ENCODE measurements at regions of chr21 and their contacts with region 1.

Region 1: GRCh38 chr21:36927719-36928117 is 38.8 kb downstream of the HLCS start:
- DNase-seq: peak; percentile 93
- H3K4me3 ChIP-seq: no peak overlapping the region
- H3K27ac ChIP-seq: no peak overlapping the region
- H3K4me1 ChIP-seq: no peaks in the 10 kb centered on the region
- H3K27me3 ChIP-seq: no peaks in the 10 kb centered on the region

Region 2: DNA sequence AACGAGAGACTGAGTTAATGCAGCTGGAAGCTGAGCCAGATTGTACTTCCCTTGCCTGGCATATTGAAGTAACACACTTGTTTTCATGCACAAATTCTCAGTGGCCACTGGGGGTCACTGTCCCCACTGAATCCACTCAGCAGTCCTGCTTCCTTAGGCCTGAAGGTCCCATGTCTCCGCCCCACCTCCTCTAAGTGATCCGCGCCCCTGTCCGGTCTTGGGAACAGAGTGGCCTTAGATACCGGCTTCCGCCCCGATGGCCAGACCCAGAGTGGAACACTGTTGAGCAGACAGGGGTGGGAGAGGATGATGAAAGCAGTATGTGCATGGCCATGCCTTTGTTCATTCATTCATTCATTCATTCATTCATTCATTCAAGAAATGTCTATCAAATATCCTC is 507.7 kb before region 1 on chr21:
- in situ Hi-C with region 1: loop called (anchors 25 kb)
- DNase-seq: peak; percentile 91
- H3K4me3 ChIP-seq: no peak overlapping the region
- H3K27ac ChIP-seq: no peak overlapping the region
- H3K4me1 ChIP-seq: no peaks in the 10 kb centered on the region
- H3K27me3 ChIP-seq: no peaks in the 10 kb centered on the region

Region 3: DNA sequence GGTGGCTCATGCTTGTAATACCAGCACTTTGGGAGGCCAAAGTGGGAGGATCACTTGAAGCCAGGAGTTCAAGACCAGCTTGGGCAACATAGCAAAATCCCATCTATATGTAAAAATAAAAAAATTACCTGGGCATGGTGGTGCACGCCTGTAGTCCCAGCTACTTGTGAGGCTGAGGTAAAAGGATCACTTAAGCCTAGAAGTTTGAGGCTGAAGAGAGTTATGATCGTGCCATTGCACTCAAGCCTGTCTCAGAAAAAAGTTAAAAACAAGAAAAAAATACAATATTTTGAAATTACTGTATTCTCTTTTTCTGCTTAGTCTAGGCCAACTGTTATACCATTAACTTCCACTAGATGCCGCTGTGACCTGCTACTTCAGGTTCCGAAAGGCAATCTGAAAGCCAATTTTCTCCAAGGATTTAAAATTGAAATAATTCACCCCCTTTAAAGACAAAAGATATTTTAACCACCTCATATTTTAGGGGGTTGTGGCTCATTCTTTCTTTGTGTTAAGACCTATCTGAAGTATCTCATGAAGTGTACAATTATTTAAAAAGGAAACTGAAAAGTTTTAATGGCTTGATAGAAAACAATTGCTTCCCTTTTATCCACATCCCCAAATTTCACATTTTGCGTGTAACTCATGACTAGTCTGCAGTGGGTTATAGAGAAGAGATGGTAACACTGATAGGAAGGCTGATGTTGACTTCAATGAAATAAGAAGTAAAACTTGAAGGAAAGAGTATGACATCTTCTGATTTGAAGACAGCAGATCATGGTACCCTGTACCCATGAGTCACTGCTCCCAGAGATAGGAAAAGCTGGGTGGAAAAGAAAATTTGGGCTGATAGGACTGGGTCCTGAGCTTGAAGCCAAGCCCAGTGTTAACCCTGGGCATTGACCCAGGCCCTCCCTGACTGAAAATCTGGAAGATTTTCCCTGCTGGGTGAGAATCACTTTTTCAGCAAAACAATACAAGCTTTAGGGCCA is 423.4 kb before region 1 on chr21:
- in situ Hi-C with region 1: loop called (anchors 10 kb)
- DNase-seq: peak; percentile 61
- H3K4me3 ChIP-seq: no peak overlapping the region
- H3K27ac ChIP-seq: no peak overlapping the region
- H3K4me1 ChIP-seq: 0 out of 2 replicates have a peak, but pooled peaks cover 4% of the 10 kb centered on the region
- H3K27me3 ChIP-seq: no peaks in the 10 kb centered on the region

Region 4: GRCh38 chr21:36630485-36631206 is 297.1 kb before region 1 on chr21:
- in situ Hi-C with region 1: loop called (anchors 25 kb)
- DNase-seq: peak; percentile 66
- H3K4me3 ChIP-seq: no peak overlapping the region
- H3K27ac ChIP-seq: no peak overlapping the region
- H3K4me1 ChIP-seq: no peaks in the 10 kb centered on the region; the same call in 1 of the 2 replicates
- H3K27me3 ChIP-seq: peaks cover 7% of the 10 kb centered on the region; the same call in 1 of the 2 replicates

Region 5: DNA sequence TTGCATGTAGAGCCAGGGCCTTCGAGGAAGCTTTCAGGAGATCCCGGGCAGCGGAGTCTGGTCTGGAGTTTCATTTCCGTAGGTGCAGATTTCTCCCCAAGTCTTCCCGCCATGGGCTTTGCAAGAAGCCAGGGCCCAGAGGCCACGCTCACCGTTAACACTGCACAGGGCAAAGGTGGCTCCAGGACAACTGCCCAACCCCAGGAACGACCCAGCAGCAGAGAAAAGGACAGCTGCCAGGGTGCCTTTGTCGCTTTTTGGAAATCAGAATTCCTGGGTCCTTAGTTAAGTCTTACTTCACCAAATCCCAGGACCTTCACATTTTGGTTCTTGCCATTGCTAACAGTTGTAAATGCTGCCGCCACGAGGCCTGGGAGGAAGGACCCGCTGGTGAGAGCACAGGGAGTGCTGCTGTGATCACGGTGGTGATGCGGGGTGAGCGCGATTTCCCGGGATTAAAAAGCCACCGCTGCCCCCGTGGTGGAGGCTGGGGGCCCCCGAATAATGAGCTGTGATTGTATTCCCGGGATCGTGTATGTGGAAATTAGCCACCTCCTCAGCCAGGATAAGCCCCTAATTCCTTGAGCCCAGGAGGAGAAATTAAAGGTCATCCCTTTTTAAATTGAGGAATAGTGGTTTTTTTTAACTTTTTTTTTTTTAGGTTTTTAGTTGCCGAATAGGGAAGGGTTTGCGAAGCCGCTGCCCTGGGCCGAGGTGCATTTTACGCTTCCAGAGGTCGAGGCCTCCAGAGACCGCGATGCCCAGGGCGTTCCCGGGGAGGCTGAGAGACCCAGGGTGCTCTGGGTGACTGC is 220.6 kb before region 1 on chr21:
- in situ Hi-C with region 1: no loop called
- DNase-seq: peak; percentile 29
- H3K4me3 ChIP-seq: no peak overlapping the region
- H3K27ac ChIP-seq: no peak overlapping the region
- H3K4me1 ChIP-seq: no peaks in the 10 kb centered on the region
- H3K27me3 ChIP-seq: peaks cover 97% of the 10 kb centered on the region

Region 6: GRCh38 chr21:37873655-37874054 is 945.9 kb after region 1 on chr21:
- in situ Hi-C with region 1: no loop called
- DNase-seq: peak; percentile 33
- H3K4me3 ChIP-seq: no peak overlapping the region
- H3K27ac ChIP-seq: no peak overlapping the region
- H3K4me1 ChIP-seq: peaks cover 39% of the 10 kb centered on the region
- H3K27me3 ChIP-seq: no peaks in the 10 kb centered on the region